ENCODE measurements at regions of chr18 and their contacts with region 1.

Region 1: GRCh38 chr18:41972067-41972925 is 17.3 kb downstream of the PIK3C3 start:
- DNase-seq: peak in 1 of 9 experiments; percentile 17
- ATAC-seq: no peak
- H3K4me3 ChIP-seq: no peak overlapping the region
- H3K4me3 Mint-ChIP-seq: no peak overlapping the region
- H3K27ac ChIP-seq: no peak overlapping the region
- H3K27ac Mint-ChIP-seq: no peak overlapping the region
- H3K4me1 ChIP-seq: peaks cover 22% of the 10 kb centered on the region
- H3K4me1 Mint-ChIP-seq: peaks cover 68% of the 10 kb centered on the region
- H3K27me3 ChIP-seq: no peaks in the 10 kb centered on the region
- H3K27me3 Mint-ChIP-seq: no peaks in the 10 kb centered on the region
- CTCF ChIP-seq: no peak

Region 2: GRCh38 chr18:41954827-41955613 is 17.3 kb before region 1 on chr18 and contains the start of gene PIK3C3:
- CTCF ChIA-PET with region 1: no interaction called
- POLR2A ChIA-PET with region 1: interaction called, 3 read pairs
- intact Hi-C with region 1: loop called in 1 of 2 experiments (anchors 2 kb)
- DNase-seq: peak; percentile 95 to 98 (median 98)
- ATAC-seq: peak; percentile 91
- H3K4me3 ChIP-seq: peak within 1 kb of the TSS; percentile 88 to 91
- H3K4me3 Mint-ChIP-seq: peak within 1 kb of the TSS; percentile 100
- H3K27ac ChIP-seq: peak within 1 kb of the TSS; percentile 84 to 86
- H3K27ac Mint-ChIP-seq: peak within 1 kb of the TSS; percentile 99
- H3K4me1 ChIP-seq: peaks cover 33% of the 10 kb centered on the region
- H3K4me1 Mint-ChIP-seq: peaks cover 44% of the 10 kb centered on the region
- H3K27me3 ChIP-seq: no peaks in the 10 kb centered on the region
- H3K27me3 Mint-ChIP-seq: no peaks in the 10 kb centered on the region
- CTCF ChIP-seq: no peak
- total RNA-seq, gene PIK3C3: 33.5 to 34.7 TPM

Region 3: DNA sequence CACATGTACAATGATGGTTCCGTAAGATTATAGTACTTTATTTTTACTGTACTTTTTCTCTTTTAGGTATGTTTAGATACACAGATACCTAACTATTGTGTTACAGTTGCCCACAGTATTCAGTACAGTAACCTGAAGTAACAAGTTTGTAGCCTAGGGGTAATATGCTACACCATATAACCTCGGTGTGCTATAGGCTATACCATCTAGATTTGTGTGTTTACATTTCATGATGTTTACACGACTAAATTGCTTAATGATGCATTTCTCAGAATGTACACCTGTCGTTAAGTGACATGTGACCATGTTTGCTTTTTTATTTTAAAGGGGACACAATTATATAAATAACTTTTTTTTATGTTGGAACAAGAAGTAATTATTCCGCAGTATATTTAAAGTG is 17.2 kb after region 1 on chr18:
- CTCF ChIA-PET with region 1: no interaction called
- POLR2A ChIA-PET with region 1: no interaction called
- intact Hi-C with region 1: loop called in 1 of 2 experiments (anchors 2 kb)
- DNase-seq: no peak
- ATAC-seq: no peak
- H3K4me3 ChIP-seq: no peak overlapping the region
- H3K4me3 Mint-ChIP-seq: no peak overlapping the region
- H3K27ac ChIP-seq: no peak overlapping the region
- H3K27ac Mint-ChIP-seq: no peak overlapping the region
- H3K4me1 ChIP-seq: no peaks in the 10 kb centered on the region
- H3K4me1 Mint-ChIP-seq: peaks cover 5% of the 10 kb centered on the region
- H3K27me3 ChIP-seq: no peaks in the 10 kb centered on the region
- H3K27me3 Mint-ChIP-seq: no peaks in the 10 kb centered on the region
- CTCF ChIP-seq: no peak

Region 4: GRCh38 chr18:42005782-42006181 is 33.5 kb after region 1 on chr18:
- CTCF ChIA-PET with region 1: no interaction called
- POLR2A ChIA-PET with region 1: no interaction called
- intact Hi-C with region 1: loop called in 1 of 2 experiments (anchors 5 kb)
- DNase-seq: no peak
- ATAC-seq: no peak
- H3K4me3 ChIP-seq: no peak overlapping the region
- H3K4me3 Mint-ChIP-seq: no peak overlapping the region
- H3K27ac ChIP-seq: no peak overlapping the region
- H3K27ac Mint-ChIP-seq: peak overlapping the region; percentile 1
- H3K4me1 ChIP-seq: no peaks in the 10 kb centered on the region
- H3K4me1 Mint-ChIP-seq: peaks cover 7% of the 10 kb centered on the region
- H3K27me3 ChIP-seq: no peaks in the 10 kb centered on the region
- H3K27me3 Mint-ChIP-seq: no peaks in the 10 kb centered on the region
- CTCF ChIP-seq: no peak

Measured in CD8-positive, alpha-beta T cell (primary cell).